Activated naive CD4-positive, alpha-beta T cell treated with anti-CD3 and anti-CD28 coated beads for 36 hours (primary cell): ENCODE measurements at regions of chr9 and their contacts with region 1.

Region 1: DNA sequence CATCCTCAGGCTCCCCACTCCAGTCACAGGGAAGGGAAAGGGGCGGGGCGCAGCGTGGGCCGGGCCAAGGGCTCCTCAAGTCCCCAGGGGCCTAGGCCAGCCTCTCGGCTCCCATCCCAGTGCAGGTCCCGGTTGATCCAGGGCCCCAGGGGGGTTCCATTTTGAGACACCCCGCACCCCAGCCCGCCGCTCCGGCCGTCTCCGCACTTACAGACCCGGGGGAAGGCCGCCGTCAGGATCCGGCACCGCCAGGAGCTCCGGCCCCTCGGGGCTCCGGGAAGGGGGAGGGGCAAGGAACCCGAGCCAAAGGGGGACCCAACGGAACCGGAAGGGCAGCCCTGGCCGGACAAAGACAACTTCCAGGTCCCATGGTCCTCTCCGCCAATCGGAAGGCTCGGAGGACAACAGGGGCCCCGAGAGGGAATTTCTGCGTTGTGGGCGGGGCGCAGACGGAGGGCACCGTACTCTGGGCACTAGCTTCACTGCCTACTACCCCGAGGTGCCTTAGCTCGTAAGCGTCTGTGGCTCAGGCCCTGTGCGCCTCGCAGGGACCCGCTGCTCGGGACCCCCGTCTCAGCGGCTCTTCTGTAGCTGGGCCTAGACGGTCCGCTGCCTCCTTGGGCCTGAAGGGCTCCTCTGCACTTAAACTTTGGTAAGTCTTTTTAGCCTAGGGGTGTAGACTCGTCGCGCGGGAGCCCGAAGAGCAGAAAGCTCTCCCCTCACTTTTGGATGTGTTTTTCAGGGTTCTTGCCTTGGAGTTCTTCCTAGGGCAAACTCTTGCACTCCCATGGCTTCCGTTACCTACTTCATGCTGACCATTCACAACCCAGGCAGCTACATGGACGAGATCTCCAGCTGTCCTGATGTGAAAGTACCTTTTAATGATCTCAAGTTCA is at the start of gene ZBTB26:
- DNase-seq: peak; percentile 93
- H3K4me3 Mint-ChIP-seq: no peak within 1 kb of the TSS
- H3K27ac Mint-ChIP-seq: peak within 1 kb of the TSS; percentile 84
- H3K4me1 Mint-ChIP-seq: peaks cover 10% of the 10 kb centered on the region
- H3K27me3 Mint-ChIP-seq: no peaks in the 10 kb centered on the region
- total RNA-seq, gene ZBTB26: 5.5 to 5.7 TPM

Region 2: GRCh38 chr9:122912964-122913673 is 18.4 kb before region 1 on chr9 and contains the start of gene ZBTB6:
- CTCF ChIA-PET with region 1: interaction called, 9 read pairs
- intact Hi-C with region 1: loop called (anchors 1 kb)
- DNase-seq: peak; percentile 86
- H3K4me3 Mint-ChIP-seq: peak within 1 kb of the TSS; percentile 96
- H3K27ac Mint-ChIP-seq: peak within 1 kb of the TSS; percentile 92
- H3K4me1 Mint-ChIP-seq: peaks cover 26% of the 10 kb centered on the region
- H3K27me3 Mint-ChIP-seq: no peaks in the 10 kb centered on the region
- total RNA-seq, gene ZBTB6: 7.7 to 8.0 TPM